ENCODE measurements at regions of chr3 and their contacts with region 1.

Region 1: DNA sequence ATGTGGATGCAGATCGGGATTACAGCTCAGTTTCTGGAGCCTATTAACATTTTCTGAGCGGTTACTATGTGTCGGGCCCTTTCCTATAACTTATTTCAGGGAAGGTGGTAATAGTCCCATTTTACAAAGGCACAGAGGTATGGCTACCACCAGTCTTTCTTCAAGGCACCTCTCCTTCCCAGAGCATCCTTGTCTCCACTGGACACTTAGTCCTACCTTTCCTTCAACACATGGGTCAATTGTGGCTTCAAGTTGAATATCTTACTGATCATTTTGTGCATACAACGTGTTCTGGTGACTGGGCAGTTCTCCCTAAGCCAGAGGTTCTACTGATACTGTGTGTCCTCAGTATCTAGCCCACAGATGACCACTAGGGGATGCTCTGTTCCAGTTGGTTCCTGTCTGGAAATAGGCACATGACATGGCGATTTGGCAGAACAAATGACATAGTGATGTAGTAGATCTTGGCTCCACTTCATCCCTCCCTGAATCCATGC is 60.7 kb upstream of the CMTM8 start:
- DNase-seq: peak; percentile 68
- H3K4me3 Mint-ChIP-seq: no peak overlapping the region
- H3K27ac Mint-ChIP-seq: no peak overlapping the region
- H3K4me1 Mint-ChIP-seq: peaks cover 7% of the 10 kb centered on the region
- H3K27me3 Mint-ChIP-seq: peaks cover 16% of the 10 kb centered on the region

Region 2: GRCh38 chr3:32166654-32167053 is 11.1 kb before region 1 on chr3:
- CTCF ChIA-PET with region 1: no interaction called
- DNase-seq: no peak
- H3K4me3 Mint-ChIP-seq: no peak overlapping the region
- H3K27ac Mint-ChIP-seq: no peak overlapping the region
- H3K4me1 Mint-ChIP-seq: no peaks in the 10 kb centered on the region
- H3K27me3 Mint-ChIP-seq: no peaks in the 10 kb centered on the region

Region 3: GRCh38 chr3:32238453-32239306 is 60.9 kb after region 1 on chr3 and contains the start of gene CMTM8:
- CTCF ChIA-PET with region 1: interaction called, 22 read pairs
- DNase-seq: peak; percentile 78
- H3K4me3 Mint-ChIP-seq: peak within 1 kb of the TSS; percentile 78
- H3K27ac Mint-ChIP-seq: peak within 1 kb of the TSS; percentile 59
- H3K4me1 Mint-ChIP-seq: peaks cover 31% of the 10 kb centered on the region
- H3K27me3 Mint-ChIP-seq: peaks cover 35% of the 10 kb centered on the region

Region 4: GRCh38 chr3:32296256-32297204 is 118.8 kb after region 1 on chr3:
- CTCF ChIA-PET with region 1: interaction called, 53 read pairs
- DNase-seq: peak; percentile 73
- H3K4me3 Mint-ChIP-seq: no peak overlapping the region
- H3K27ac Mint-ChIP-seq: peak overlapping the region; percentile 91
- H3K4me1 Mint-ChIP-seq: peaks cover 43% of the 10 kb centered on the region
- H3K27me3 Mint-ChIP-seq: no peaks in the 10 kb centered on the region

Region 5: GRCh38 chr3:32340039-32340438 is 162.3 kb after region 1 on chr3:
- CTCF ChIA-PET with region 1: interaction called, 48 read pairs
- DNase-seq: peak; percentile 45
- H3K4me3 Mint-ChIP-seq: no peak overlapping the region
- H3K27ac Mint-ChIP-seq: no peak overlapping the region
- H3K4me1 Mint-ChIP-seq: peaks cover 24% of the 10 kb centered on the region
- H3K27me3 Mint-ChIP-seq: no peaks in the 10 kb centered on the region

Measured in activated naive CD4-positive, alpha-beta T cell treated with anti-CD3 and anti-CD28 coated beads, Interleukin-2, amount 10 ng/mL, durations not matched to agents 7 days and 5 days (primary cell).